HepG2 (cell line): ENCODE measurements at regions of chr2 and their contacts with region 1.

Region 1: DNA sequence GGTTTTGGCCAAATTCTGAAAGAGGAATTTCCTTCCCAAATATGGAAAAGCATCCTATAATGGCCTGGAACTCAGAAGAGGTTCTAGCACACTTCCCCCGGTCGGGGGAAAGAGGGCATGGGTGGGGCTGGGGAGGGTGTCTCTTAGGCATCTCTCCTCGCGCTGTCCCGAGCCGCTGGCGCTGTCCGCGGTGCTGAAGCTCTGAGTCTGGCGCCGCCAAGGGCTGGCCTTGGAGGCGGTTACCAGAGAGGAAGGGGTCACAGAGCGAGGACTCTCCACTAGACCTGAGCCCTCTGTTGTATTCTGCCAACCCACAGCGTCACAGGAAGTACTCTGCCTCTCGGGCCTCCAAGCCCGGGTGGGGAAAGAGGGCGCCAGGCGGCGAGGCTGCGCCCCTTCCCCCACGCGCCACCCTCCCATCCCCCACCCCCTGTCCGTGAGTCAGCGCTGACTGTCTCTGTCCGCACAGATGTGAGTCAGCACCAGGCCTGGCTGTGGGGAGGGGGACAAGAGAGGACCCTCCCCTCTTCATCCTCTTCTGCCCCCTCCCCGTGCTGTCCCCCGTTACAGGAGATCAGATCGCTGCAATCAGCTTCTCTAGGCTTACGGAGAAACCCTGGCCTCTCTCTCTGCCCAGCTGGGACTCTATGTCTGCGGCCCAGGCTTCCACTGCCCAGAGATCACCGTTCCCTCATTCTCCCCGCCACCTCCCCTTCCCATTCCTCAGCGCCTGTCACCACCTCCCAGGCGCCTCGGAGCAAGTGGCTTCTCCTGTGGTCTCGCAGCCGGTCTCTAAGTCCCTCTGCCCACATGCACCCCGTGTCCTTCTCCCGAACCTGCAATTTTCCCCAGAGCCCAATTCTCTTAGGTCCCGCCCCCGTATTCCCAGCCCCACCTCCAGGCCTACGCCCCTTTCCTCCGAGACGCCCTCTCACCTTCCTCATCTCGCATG is 783 bp downstream of the PTPRN start:
- DNase-seq: peak; percentile 41
- ATAC-seq: peak; percentile 97
- H3K4me3 ChIP-seq: no peak overlapping the region
- H3K27ac ChIP-seq: no peak overlapping the region
- H3K4me1 ChIP-seq: no peaks in the 10 kb centered on the region
- H3K27me3 ChIP-seq: peaks cover 1 to 19% of the 10 kb centered on the region in 2 experiments; a peak in 3 of 5 replicates
- CTCF ChIP-seq: peak; percentile 33
- EP300 ChIP-seq: no peak
- POLR2A ChIP-seq: no peak
- RAD21 ChIP-seq: 0 out of 2 replicates have a peak, but pooled peaks have one; percentile 27

Region 2: DNA sequence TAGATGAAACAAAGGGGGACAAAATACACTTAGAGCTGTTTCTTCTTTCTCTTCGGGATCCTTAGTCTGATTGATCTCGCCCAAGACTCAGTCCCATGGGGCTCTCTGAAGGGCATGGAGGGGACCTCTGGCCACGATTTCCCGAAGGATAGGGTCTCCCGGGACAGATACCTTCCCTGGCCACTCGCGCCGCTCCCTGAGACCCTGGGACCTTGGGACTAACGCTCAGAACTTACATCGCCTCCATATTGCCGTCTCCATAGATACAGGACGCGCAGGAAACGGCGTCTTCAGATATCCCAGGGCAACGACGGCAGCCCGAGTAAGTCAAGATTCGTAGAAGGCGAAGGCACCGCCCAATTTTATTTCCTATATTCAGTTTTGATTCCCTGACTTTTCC is 267.2 kb before region 1 on chr2 and contains the start of gene CFAP65:
- CTCF ChIA-PET with region 1: no interaction called
- POLR2A ChIA-PET with region 1: no interaction called
- in situ Hi-C with region 1: loop called (anchors 5 kb)
- intact Hi-C with region 1: loop called (anchors 1 kb)
- DNase-seq: no peak
- ATAC-seq: no peak
- H3K4me3 ChIP-seq: no peak within 1 kb of the TSS
- H3K27ac ChIP-seq: no peak within 1 kb of the TSS
- H3K4me1 ChIP-seq: peaks cover 25% of the 10 kb centered on the region
- H3K27me3 ChIP-seq: peaks cover 5 to 37% of the 10 kb centered on the region in 2 experiments; a peak in 4 of 5 replicates
- CTCF ChIP-seq: no peak
- EP300 ChIP-seq: no peak
- POLR2A ChIP-seq: no peak
- RAD21 ChIP-seq: no peak
- total RNA-seq, gene CFAP65: not detected in 2 replicates

Region 3: DNA sequence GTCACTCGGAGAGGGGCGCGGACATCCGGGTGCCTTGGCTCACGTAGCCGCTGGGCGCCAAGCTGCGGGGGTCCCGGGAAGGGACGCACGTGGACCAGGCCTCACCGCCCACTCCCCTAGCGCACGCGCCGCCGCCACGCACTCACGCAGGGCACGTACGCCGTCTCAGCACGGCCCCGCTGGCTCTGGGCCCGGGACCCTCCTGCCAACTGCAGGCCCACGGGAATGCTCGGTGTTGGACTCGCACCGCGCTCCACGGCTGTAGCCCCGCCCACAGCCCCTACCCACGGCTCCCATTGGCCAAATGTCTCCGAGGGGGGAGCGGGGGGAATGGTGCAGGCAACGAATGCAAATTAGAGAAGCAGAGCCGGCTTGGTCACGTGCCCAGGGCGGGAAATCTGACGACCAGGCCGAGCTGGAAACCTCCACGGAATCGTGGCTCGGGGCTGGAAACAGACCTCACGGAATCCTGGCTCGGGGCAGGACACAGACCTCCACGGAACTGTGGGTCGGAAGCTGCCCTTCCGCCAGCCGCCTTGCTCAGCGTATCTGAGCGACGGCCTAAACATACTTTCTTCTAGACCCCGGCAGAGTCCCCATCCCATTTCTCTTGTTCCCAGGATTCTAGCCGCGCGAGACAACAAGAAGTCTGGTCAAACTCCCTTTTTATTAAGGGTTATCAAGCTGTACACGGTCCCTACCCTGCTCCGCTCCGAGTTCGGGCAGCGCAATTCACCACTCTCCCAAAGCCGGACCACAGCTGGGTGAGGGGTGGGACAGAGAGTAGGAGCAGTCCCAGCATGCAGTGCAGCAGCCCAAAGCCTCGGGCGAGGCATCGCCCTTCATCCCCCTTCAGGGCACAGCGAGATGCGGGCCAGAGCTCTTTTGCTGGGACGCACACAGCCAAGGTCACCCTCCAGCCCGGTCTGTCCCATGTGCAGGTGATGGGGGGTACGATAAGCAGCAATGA is 89.4 kb before region 1 on chr2 and contains the start of gene ABCB6:
- CTCF ChIA-PET with region 1: no interaction called
- POLR2A ChIA-PET with region 1: no interaction called
- in situ Hi-C with region 1: no loop called
- intact Hi-C with region 1: no loop called
- DNase-seq: peak; percentile 93
- ATAC-seq: peak; percentile 79
- H3K4me3 ChIP-seq: peak within 1 kb of the TSS; percentile 80 to 92 (median 85)
- H3K27ac ChIP-seq: peak within 1 kb of the TSS; percentile 92
- H3K4me1 ChIP-seq: peaks cover 43% of the 10 kb centered on the region
- H3K27me3 ChIP-seq: no peaks in the 10 kb centered on the region
- CTCF ChIP-seq: 0 out of 2 replicates have a peak, but pooled peaks have one; percentile 20
- EP300 ChIP-seq: no peak; a peak in 1 of 4 replicates
- POLR2A ChIP-seq: peak in 1 of 2 experiments; percentile 94; a peak in 2 of 4 replicates
- RAD21 ChIP-seq: no peak
- total RNA-seq, gene ABCB6: 51.3 and 137 TPM in 2 replicates

Region 4: DNA sequence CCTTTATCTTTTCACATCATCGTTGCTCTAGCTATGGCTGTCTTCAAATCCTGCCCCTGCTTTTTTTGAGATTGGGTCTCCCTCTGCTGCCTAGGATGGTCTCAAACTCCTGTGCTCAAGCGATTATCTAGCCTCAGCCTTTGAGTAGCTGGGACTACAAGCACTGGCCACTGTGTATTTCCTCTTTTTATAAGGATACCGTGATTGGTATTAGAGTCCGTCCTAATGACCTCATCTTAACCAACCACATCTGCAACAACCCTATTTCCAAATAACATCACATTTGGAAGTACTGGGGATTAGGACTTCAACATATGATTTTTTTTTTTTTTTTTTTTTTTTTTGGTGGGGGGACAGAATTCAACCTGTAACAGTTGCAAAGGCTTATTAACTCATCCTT is 15.0 kb after region 1 on chr2:
- CTCF ChIA-PET with region 1: no interaction called
- POLR2A ChIA-PET with region 1: no interaction called
- in situ Hi-C with region 1: no loop called
- intact Hi-C with region 1: loop called (anchors 2 kb)
- DNase-seq: no peak
- ATAC-seq: no peak
- H3K4me3 ChIP-seq: no peak overlapping the region
- H3K27ac ChIP-seq: no peak overlapping the region
- H3K4me1 ChIP-seq: no peaks in the 10 kb centered on the region
- H3K27me3 ChIP-seq: no peaks in the 10 kb centered on the region; a peak in 2 of 5 replicates
- CTCF ChIP-seq: no peak
- EP300 ChIP-seq: no peak
- POLR2A ChIP-seq: no peak
- RAD21 ChIP-seq: no peak